Right ventricle myocardium inferior (tissue), 1 donor: ENCODE measurements at regions of chr7 and their contacts with region 1.

Region 1: GRCh38 chr7:117458977-117459583 is 20.7 kb upstream of the CFTR start:
- DNase-seq: no peak
- ATAC-seq: no peak

Region 2: GRCh38 chr7:117259615-117260014 is 199.5 kb before region 1 on chr7:
- intact Hi-C with region 1: no loop called
- DNase-seq: no peak
- ATAC-seq: no peak

Region 3: GRCh38 chr7:117715784-117716445 is 256.8 kb after region 1 on chr7:
- intact Hi-C with region 1: loop called (anchors 1 kb)
- DNase-seq: no peak
- ATAC-seq: peak; percentile 39